ENCODE measurements at regions of chr7 and their contacts with region 1.

Region 1: DNA sequence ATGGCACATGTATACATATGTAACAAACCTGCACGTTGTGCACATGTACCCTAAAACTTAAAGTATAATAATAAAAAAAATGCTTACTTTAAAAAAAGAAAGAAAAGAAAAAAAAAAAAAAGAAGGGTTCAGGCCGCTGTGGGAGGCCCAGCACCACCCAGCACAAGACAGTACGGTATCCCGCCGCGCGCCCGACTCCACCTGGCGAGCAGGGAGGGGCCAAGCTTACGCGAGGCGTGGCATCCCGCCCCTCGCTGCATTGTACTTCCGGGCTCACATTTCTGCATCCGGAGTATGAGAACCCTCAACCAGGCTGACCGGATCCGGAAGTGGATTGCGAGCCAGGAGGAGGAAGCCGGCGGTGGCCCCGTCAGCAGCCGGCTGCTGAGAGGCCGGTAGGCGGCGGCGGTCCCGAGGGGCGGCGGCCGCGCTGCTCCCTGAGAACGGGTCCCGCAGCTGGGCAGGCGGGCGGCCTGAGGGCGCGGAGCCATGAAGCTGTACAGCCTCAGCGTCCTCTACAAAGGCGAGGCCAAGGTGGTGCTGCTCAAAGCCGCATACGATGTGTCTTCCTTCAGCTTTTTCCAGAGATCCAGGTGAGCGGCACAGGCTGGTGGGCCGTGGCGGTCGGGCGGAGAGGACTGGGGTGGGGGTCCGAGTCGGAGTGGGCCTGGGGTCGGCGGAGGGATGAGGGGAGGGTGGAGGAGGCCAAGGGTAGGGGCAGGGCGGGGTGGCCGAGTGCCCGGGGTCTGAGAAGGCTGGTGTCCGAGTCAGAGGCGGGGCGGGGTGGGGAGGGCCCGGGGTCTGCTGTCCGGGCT is at the start of gene YKT6:
- DNase-seq: peak; percentile 94
- ATAC-seq: peak; percentile 97
- H3K4me3 ChIP-seq: peak within 1 kb of the TSS; percentile 95 to 98
- H3K27ac ChIP-seq: peak within 1 kb of the TSS; percentile 57
- H3K4me1 ChIP-seq: peaks cover 10 to 16% of the 10 kb centered on the region in 2 experiments; a peak in 2 of 4 replicates
- H3K27me3 ChIP-seq: no peaks in the 10 kb centered on the region
- CTCF ChIP-seq: peak in 2 of 3 experiments; percentile 44 to 69; a peak in 4 of 6 replicates
- POLR2A ChIP-seq: peak; percentile 75
- RAD21 ChIP-seq: no peak
- total RNA-seq, gene YKT6: 84.8 TPM

Region 2: GRCh38 chr7:44072364-44073231 is 128.3 kb before region 1 on chr7:
- CTCF ChIA-PET with region 1: interaction called, 5 read pairs
- POLR2A ChIA-PET with region 1: no interaction called
- RAD21 ChIA-PET with region 1: no interaction called
- intact Hi-C with region 1: loop called (anchors 1 kb)
- DNase-seq: peak; percentile 48
- ATAC-seq: peak; percentile 84
- H3K4me3 ChIP-seq: no peak overlapping the region
- H3K27ac ChIP-seq: peak overlapping the region; percentile 45
- H3K4me1 ChIP-seq: peaks cover 11 to 33% of the 10 kb centered on the region in 2 experiments
- H3K27me3 ChIP-seq: no peaks in the 10 kb centered on the region
- CTCF ChIP-seq: peak; percentile 57 to 83 (median 72); a peak in 5 of 6 replicates
- POLR2A ChIP-seq: no peak
- RAD21 ChIP-seq: peak; percentile 69

Region 3: GRCh38 chr7:44131173-44132029 is 69.5 kb before region 1 on chr7:
- CTCF ChIA-PET with region 1: interaction called, 8 read pairs
- POLR2A ChIA-PET with region 1: no interaction called
- RAD21 ChIA-PET with region 1: interaction called in 1 of 2 experiments, 4 read pairs
- intact Hi-C with region 1: loop called (anchors 1 kb)
- DNase-seq: no peak
- ATAC-seq: peak; percentile 83
- H3K4me3 ChIP-seq: no peak overlapping the region
- H3K27ac ChIP-seq: no peak overlapping the region
- H3K4me1 ChIP-seq: peaks cover 0 to 5% of the 10 kb centered on the region in 2 experiments; a peak in 1 of 4 replicates
- H3K27me3 ChIP-seq: no peaks in the 10 kb centered on the region
- CTCF ChIP-seq: peak; percentile 41 to 54 (median 53); a peak in 4 of 6 replicates
- POLR2A ChIP-seq: no peak
- RAD21 ChIP-seq: peak; percentile 77